Posterior cingulate gyrus (tissue), 11 donors: ENCODE measurements at regions of chr6 and their contacts with region 1.

Region 1: DNA sequence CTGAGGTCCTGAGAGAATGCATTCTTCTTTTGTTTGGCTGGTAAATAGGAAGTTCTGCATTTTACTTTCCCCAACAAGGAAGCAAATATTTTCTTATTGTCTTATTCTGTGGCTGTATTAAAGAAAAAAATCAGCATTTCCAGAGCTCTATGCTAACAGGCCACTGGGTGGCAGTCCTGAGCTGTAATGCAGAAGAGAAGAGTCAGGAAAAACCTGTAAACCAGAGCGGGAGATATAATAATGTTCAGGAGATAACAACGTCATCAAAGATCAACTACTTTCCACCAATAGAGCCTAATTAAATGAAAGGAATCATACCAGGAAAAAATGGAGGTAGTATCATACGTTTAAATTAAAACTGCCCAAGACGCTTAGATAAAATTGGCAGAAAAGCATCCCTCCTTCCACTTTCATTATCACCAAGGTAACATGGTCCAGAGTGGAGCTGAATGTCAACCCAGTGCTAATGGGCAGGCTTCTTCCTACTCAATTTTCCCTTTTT is 55.6 kb upstream of the CARMIL1 start:
- DNase-seq: peak in 9 of 10 donors; percentile 17 to 89 (median 66)

Region 2: DNA sequence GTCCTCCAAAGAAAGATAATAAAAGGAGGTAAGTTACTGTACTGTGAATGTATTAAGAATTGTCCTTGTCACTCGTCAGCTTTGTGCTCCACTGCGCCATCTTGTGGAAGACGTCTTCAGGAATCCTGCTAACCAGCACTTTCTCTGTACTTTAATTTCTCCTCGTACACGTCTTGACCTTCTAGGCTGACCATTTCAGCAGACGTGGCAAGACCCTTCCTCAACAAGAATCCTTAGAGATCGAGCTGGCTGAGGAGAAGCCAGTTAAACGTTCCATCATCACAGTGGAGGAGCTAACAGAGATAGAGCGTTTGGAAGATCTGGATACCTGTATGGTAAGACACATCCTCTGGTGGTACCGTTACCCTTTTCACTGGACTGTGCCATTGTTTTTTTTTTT is 333.0 kb after region 1 on chr6:
- intact Hi-C with region 1: loop called (anchors 1 kb)
- DNase-seq: peak; percentile 49 to 94 (median 83)

Region 3: GRCh38 chr6:25601800-25602673 is 378.5 kb after region 1 on chr6:
- intact Hi-C with region 1: loop called (anchors 2 kb)
- DNase-seq: no peak

Region 4: DNA sequence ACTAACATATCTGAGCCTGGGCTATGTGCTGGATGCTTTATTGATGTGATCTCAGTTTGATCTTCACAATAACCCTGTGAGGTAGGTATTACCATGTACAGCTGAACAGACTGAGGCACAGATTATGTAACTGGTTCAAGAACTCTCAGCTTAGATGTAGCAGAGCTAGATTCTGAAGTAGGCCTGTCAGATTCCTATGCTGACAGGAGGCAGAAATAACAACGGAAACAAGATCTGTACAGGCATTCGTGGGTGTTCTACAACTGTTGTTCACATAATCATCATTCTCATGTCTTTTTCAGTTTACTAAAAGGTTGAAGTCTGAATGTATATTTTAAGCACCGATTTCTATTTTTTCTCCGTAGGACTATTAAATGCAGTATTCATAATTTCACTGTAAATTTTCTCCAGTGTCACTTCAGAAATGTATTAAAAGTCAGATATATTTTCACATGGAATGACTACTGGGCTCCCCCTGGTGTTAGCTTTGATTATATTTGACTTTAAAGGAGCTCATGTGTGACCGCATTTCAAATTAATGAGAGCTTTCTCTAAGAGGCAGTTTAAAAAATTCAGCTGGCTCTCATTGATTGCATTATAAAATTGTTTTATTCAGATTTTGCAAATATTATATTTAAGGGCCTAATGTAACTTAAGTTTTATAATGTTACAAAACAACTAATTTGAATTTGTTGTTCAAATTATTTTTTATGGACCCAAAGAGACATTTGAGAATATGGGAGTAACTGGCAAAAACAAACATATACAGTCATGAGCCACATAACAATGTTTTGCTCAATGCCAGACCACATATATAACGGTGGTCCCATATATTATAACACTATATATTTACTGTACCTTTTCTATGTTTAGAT is 494.6 kb after region 1 on chr6:
- intact Hi-C with region 1: loop called (anchors 10 kb)
- DNase-seq: no peak